K562 (cell line): ENCODE measurements at regions of chr7 and their contacts with region 1.

Region 1: GRCh38 chr7:128236924-128237586 is 4.0 kb upstream of the LEP start:
- DNase-seq: peak in 2 of 4 experiments; percentile 52 to 59
- ATAC-seq: peak; percentile 89
- H3K4me3 ChIP-seq: no peak overlapping the region
- H3K27ac ChIP-seq: peak overlapping the region; percentile 3; the same call in 1 of the 3 replicates
- H3K4me1 ChIP-seq: peaks cover 0 to 7% of the 10 kb centered on the region in 2 experiments; a peak in 2 of 5 replicates
- H3K27me3 ChIP-seq: peaks cover 36 to 58% of the 10 kb centered on the region in 2 experiments
- CTCF ChIP-seq: no peak
- EP300 ChIP-seq: peak; percentile 61
- POLR2A ChIP-seq: no peak
- RAD21 ChIP-seq: no peak

Region 2: GRCh38 chr7:128247676-128248194 is 10.7 kb after region 1 on chr7:
- CTCF ChIA-PET with region 1: no interaction called
- POLR2A ChIA-PET with region 1: interaction called, 16 read pairs
- in situ Hi-C with region 1: no loop called
- intact Hi-C with region 1: no loop called
- DNase-seq: peak in 2 of 4 experiments; percentile 44 to 68
- ATAC-seq: peak; percentile 82
- H3K4me3 ChIP-seq: no peak overlapping the region
- H3K27ac ChIP-seq: no peak overlapping the region
- H3K4me1 ChIP-seq: no peaks in the 10 kb centered on the region; a peak in 2 of 5 replicates
- H3K27me3 ChIP-seq: peaks cover 44 to 65% of the 10 kb centered on the region in 2 experiments; a peak in 4 of 5 replicates
- CTCF ChIP-seq: 0 out of 6 replicates have a peak, but pooled peaks of 1 of the 3 experiments have one; percentile 17
- EP300 ChIP-seq: no peak
- POLR2A ChIP-seq: no peak
- RAD21 ChIP-seq: no peak

Region 3: DNA sequence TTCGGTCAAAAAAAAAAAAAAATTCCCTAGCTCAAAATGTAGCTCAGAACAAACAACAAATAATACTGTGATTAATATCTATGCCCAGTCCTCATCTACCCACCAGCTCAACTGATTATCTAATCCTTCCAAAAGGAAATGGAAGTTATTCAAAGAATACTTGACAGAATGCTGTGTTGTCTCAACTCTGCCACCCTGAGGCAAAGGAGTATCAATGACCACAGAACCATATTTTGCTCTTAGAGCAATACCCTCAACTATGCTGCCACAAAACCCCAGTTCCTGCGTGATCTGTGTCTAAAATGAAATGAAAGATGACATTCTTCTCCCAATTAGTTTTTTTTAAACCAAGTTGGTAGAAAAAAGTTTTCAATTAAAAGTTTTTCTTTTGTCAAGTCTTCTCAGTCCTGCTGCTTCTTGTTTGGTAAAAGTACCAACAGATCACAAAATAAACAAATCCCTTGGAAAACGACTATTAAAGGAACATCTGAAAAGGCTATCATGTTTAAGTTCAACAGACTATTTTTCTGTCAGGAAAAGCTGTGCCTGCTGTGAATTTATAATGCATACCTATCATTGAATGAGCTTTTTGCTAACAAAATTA is 85.1 kb after region 1 on chr7:
- CTCF ChIA-PET with region 1: no interaction called
- POLR2A ChIA-PET with region 1: no interaction called
- in situ Hi-C with region 1: no loop called
- intact Hi-C with region 1: loop called (anchors 5 kb)
- DNase-seq: peak in 1 of 4 experiments; percentile 51
- ATAC-seq: peak; percentile 90
- H3K4me3 ChIP-seq: no peak overlapping the region
- H3K27ac ChIP-seq: no peak overlapping the region
- H3K4me1 ChIP-seq: no peaks in the 10 kb centered on the region; a peak in 1 of 5 replicates
- H3K27me3 ChIP-seq: no peaks in the 10 kb centered on the region
- CTCF ChIP-seq: peak; percentile 42 to 70 (median 60); a peak in 5 of 6 replicates
- EP300 ChIP-seq: no peak
- POLR2A ChIP-seq: no peak
- RAD21 ChIP-seq: peak; percentile 53 to 69

Region 4: DNA sequence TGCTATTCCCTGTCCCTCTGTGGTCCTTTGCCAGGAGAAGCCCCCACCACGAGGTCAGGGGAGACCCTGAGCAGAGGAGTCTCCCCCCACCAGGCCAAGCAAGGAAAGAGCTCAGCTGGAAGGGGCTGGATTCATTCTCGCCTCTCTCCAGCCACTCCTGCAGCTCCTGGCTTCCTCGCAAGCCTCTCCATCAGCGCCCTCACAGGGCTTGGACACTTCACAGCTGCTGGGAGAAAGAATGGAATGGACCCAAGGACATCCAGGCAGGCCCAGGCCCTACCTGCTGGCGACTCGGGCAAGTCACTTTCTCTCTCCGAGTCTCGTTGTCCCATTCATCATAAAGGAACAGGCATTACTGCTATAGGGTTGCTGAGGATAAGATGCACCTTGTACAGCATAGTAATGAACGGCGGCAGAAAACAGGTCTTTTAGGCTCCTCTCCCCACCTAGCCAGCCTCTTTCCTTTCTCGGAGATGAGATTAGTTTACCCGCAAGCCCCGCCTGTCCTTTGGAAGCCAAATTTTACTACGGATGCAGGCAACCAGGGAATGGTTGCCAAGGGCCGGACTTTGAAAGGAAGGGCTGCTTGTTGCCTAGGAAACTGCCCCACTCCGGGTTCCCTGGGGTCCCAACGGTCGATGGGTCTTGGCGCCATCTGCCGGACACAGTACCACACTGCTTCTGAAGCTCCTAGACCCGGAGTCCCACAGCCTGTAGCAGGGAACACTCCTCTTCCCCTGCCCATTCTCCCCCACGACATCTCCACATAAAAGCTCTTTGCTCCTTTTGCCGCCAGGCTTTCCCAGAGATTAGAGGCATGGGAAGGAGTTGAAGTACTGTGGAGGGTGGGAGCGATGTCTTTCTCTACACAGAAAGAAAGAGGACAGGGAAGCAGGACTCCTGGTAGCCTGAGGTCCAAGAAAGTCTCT is 150.4 kb after region 1 on chr7:
- CTCF ChIA-PET with region 1: no interaction called
- POLR2A ChIA-PET with region 1: no interaction called
- in situ Hi-C with region 1: no loop called
- intact Hi-C with region 1: loop called (anchors 10 kb)
- DNase-seq: peak; percentile 88 to 97 (median 96)
- ATAC-seq: peak; percentile 92
- H3K4me3 ChIP-seq: no peak overlapping the region
- H3K27ac ChIP-seq: no peak overlapping the region
- H3K4me1 ChIP-seq: peaks cover 5 to 20% of the 10 kb centered on the region in 2 experiments; a peak in 4 of 5 replicates
- H3K27me3 ChIP-seq: no peaks in the 10 kb centered on the region
- CTCF ChIP-seq: peak; percentile 95 to 97 (median 97)
- EP300 ChIP-seq: no peak
- POLR2A ChIP-seq: no peak
- RAD21 ChIP-seq: peak; percentile 92 to 93